ENCODE measurements at regions of chr7 and their contacts with region 1.

Region 1: DNA sequence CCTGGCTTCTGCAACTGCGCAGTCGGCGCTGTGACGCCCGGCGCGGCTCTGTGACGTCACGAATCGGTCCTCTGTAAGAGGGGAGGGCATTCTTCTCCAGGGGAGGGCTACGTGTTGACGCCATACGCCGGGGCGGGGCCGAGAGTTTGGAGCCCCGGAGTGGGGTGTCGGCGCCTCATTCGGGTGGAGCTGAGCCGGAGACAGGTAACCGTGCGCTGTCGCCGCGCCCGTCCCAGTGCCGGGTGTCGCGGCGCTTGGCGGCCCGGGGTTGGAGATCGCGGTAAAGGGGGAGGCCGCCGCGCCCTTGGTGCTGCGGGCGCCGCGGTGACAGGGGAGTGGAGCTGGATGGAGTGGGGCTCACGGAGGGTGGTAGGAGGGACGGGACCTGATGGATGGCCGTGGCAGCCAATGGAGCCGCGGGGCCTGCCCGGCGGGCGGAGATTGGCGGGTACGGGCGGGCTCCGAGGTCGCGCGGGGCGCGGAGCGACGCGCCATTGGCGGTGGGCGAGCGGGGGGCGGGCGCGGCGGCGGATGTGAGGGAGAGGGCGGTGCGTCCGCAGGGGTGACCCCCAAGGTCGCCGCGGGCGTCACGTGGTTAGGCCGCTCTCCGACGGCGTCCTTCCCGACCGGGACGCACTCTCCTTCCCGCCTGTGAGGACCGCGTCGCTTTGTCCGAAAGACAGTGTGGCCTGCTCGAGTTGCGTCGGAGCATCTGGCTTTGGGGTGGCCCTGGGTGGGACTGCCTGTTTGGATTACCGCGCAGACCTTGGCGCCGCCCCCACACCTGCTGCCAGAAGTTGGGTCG is at the start of gene OGDH:
- DNase-seq: peak; percentile 95 to 99
- H3K4me3 ChIP-seq: peak within 1 kb of the TSS; percentile 70 to 85
- H3K27ac ChIP-seq: peak within 1 kb of the TSS; percentile 95 to 99
- H3K4me1 ChIP-seq: peaks cover 0 to 7% of the 10 kb centered on the region in 2 donors
- H3K27me3 ChIP-seq: no peaks in the 10 kb centered on the region
- CTCF ChIP-seq: no peak
- total RNA-seq, gene OGDH: 117 TPM

Region 2: GRCh38 chr7:43925984-43926797 is 680.5 kb before region 1 on chr7 and contains the start of gene UBE2D4:
- intact Hi-C with region 1: loop called (anchors 10 kb)
- DNase-seq: peak; percentile 56 to 92
- H3K4me3 ChIP-seq: peak within 1 kb of the TSS; percentile 82 to 86
- H3K27ac ChIP-seq: peak within 1 kb of the TSS; percentile 96
- H3K4me1 ChIP-seq: peaks cover 0 to 7% of the 10 kb centered on the region in 2 donors
- H3K27me3 ChIP-seq: no peaks in the 10 kb centered on the region
- CTCF ChIP-seq: no peak
- total RNA-seq, gene UBE2D4: 13.1 TPM

Region 3: GRCh38 chr7:44581879-44582603 is 24.6 kb before region 1 on chr7 and contains the start of gene TMED4:
- intact Hi-C with region 1: loop called (anchors 1 kb)
- DNase-seq: peak; percentile 98 to 100
- H3K4me3 ChIP-seq: peak within 1 kb of the TSS; percentile 92 to 96
- H3K27ac ChIP-seq: peak within 1 kb of the TSS; percentile 88 to 97
- H3K4me1 ChIP-seq: peaks cover 6 to 17% of the 10 kb centered on the region in 2 donors
- H3K27me3 ChIP-seq: no peaks in the 10 kb centered on the region
- CTCF ChIP-seq: no peak
- total RNA-seq, gene TMED4: 69.1 TPM

Region 4: DNA sequence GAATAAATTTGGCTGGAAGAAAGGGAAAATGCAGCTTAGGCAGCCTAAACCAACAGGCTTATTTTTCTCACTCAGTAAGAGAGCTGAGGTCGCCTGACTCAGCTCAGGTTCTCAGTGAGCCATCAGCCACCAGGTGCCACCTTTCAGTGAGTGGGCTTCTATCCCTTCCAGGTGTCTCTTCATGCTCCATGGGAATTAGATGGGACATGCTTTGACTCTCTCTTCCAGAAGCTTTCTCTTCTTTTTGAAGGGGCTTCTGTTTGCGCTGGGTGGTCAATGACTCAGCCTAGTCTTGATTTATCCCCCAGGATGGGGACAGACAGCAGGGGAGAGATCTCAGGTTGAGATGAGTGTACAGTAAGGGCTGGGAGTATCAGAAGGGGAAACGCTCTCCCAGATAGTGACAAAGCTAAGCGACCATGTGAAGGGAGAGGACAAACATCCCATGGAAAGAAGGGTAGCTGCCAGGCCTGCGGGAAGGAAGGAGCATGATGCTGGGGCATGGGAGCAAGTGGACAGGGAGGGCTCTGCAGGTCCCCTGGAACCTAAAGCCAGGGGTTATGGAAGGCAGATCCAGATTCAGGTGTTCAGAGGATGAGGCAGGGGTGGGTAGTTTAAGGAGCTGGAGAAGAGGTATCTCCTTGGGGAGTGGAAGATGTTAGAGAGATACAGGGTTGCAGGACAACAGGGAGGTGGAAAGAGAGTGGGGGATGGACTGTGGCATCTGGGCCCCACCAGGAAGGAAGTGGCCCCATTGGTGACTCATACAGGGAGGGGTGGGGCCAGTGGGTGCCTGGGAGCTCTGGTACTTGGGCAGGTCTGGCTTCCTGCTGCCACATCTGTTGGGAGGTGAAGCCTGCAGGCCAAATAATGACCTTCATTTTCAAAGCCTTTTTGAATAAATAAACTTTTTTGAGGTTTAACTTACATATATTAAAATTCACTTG is 32.2 kb after region 1 on chr7:
- intact Hi-C with region 1: loop called (anchors 1 kb)
- DNase-seq: peak; percentile 66 to 85
- H3K4me3 ChIP-seq: no peak overlapping the region
- H3K27ac ChIP-seq: peak overlapping the region; percentile 88 to 89
- H3K4me1 ChIP-seq: peaks cover 18 to 35% of the 10 kb centered on the region in 2 donors
- H3K27me3 ChIP-seq: no peaks in the 10 kb centered on the region
- CTCF ChIP-seq: no peak

Region 5: DNA sequence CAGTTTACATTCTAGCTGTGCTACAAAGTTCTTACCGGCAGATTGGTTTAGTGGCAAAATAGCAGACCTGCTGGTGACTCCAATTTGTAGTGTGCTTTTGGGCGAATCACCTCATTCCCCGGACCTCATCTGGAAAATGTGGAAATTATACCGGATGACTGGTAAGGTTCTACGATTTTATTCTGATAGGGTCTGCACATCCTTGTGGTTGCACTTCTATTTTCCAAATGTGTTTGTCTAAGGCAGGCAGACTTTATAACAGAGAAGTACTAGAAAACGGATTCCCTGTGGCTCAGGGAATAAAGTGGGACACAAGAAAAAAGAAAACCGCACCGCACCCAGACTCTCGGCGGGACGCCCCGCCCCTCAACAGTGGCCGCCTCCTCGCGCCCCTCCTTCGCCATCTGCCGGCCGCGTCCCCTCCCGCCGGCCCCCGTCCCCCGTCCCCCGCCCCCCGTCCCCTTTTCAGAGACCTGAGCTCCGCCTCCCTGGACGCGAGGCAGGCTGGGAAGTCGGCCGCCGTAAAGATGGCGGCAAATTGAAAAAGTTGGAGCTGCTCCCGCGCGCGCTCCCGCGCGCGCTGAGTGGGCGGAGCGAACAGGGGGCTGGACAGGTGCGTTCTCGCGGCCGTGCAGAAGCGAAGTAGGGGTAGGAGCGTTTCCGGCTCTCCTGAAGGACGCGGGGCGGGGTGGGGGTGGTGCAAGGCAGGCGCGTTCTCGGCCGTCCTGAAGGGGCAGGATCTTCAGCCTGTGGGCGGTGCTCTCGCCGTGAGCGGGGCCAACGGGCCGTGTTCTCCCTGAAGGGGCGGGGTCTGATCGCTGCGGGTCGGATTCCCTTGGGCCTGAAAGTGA is 392.8 kb after region 1 on chr7:
- intact Hi-C with region 1: loop called (anchors 1 kb)
- DNase-seq: peak; percentile 98 to 100
- H3K4me3 ChIP-seq: peak overlapping the region; percentile 87 to 96
- H3K27ac ChIP-seq: peak overlapping the region; percentile 78 to 96
- H3K4me1 ChIP-seq: peaks cover 0 to 18% of the 10 kb centered on the region in 2 donors
- H3K27me3 ChIP-seq: no peaks in the 10 kb centered on the region
- CTCF ChIP-seq: peak in 1 of 3 experiments; percentile 26

Measured in ascending aorta (tissue), 2 donors.